PC-3 (cell line): ENCODE measurements at regions of chr5 and their contacts with region 1.

Region 1: GRCh38 chr5:180810210-180810958 is 7.8 kb upstream of the MGAT1 start:
- DNase-seq: peak; percentile 98
- ATAC-seq: peak; percentile 84
- H3K4me3 ChIP-seq: peak overlapping the region; percentile 74
- H3K27ac ChIP-seq: peak overlapping the region; percentile 89
- H3K4me1 ChIP-seq: peaks cover 44% of the 10 kb centered on the region
- H3K27me3 ChIP-seq: no peaks in the 10 kb centered on the region
- CTCF ChIP-seq: no peak

Region 2: GRCh38 chr5:180825768-180826525 is 15.6 kb after region 1 on chr5:
- CTCF ChIA-PET with region 1: no interaction called
- POLR2A ChIA-PET with region 1: interaction called, 5 read pairs
- intact Hi-C with region 1: loop called (anchors 1 kb)
- DNase-seq: peak; percentile 99
- ATAC-seq: peak; percentile 81
- H3K4me3 ChIP-seq: no peak overlapping the region
- H3K27ac ChIP-seq: peak overlapping the region; percentile 13; the same call in 1 of the 2 replicates
- H3K4me1 ChIP-seq: peaks cover 21% of the 10 kb centered on the region
- H3K27me3 ChIP-seq: no peaks in the 10 kb centered on the region
- CTCF ChIP-seq: no peak

Region 3: DNA sequence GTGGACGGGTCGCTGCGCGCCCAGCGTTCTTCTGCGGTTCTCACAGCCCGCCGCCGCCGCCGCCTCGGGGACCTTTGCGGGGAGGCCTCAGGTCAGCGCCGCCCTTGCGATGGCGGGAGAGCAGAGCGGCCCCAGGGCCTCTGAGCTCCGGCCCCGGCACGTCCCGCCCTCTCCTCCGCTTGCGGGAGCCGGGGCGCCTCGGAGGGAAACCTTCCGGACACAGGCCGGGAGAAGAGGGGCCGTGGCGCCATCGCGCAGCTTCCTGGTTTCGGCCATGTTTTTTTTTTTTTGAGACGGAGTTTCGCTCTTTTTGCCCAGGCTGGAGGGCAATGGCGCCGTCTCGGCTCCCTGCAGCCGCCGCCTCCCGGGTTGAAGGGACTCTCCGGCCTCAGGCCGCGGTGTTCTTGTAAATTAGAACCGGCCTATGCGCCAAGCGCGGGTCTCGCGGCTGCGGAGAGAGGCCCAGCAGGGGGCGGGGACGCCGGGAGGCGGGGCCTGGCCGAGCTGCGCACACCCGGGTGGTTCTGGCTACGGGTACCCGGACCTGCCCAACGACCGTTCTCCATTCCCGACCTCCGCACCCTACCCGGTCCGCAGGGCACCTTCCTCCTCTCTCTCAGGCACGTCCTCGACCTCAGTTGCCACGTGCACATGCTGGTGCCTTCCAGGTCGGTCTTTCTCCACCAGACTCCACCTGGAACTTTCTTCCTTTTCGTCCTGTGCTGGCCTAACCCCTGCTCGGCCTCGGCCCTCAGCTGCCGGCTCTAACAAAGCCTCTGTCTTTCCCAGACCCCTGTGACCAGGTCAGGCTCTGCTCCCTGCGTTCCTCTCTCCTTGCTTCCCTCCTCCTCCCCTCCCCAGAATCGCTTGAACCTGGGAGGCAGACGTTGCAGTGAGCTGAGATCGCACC is 21.0 kb after region 1 on chr5:
- CTCF ChIA-PET with region 1: no interaction called
- POLR2A ChIA-PET with region 1: interaction called, 5 read pairs
- intact Hi-C with region 1: loop called (anchors 1 kb)
- DNase-seq: peak; percentile 80
- ATAC-seq: peak; percentile 96
- H3K4me3 ChIP-seq: peak overlapping the region; percentile 77
- H3K27ac ChIP-seq: peak overlapping the region; percentile 65
- H3K4me1 ChIP-seq: peaks cover 22% of the 10 kb centered on the region
- H3K27me3 ChIP-seq: no peaks in the 10 kb centered on the region
- CTCF ChIP-seq: no peak